ENCODE measurements at regions of chr2 and their contacts with region 1.

Region 1: DNA sequence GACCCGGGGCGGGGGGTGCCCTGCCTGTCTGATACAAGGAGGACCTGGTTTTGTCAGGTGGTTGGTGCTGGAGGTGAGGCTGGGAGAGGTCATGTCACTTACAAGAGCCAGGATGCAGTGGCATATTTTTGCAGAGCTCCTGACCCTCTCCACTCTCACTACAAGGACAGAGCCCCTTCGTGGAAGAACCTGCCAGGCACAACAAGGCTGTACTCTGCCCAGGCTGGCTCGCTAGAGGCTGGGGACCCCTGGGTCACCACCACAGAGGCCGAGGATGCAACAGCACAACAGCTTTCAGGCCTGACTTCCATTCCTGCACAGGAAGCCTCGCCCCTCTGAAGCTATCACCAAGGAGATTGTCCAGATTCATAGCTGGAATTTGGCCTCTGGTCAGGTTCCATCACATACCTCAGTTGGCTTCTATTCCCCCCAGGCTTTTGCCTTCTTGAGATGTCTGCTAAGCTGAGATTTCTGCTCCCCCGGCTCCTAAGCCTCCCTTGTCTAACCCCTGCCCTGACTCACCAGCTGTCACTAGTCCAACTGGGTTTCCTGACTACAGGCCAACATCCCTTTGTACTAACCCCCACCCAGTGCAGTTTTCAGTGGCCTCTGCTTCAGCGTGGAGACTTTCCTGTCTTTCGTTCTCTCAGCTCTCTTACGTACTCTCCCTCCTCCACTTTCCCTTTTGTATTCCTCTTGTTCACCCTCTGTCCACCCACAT is 132.5 kb upstream of the EPAS1 start:
- DNase-seq: peak; percentile 29 to 67 (median 47)
- ATAC-seq: peak; percentile 80
- H3K4me3 ChIP-seq: no peak overlapping the region
- H3K27ac ChIP-seq: peak overlapping the region in 1 of 4 donors; percentile 15
- H3K4me1 ChIP-seq: no peaks in the 10 kb centered on the region
- H3K27me3 ChIP-seq: no peaks in the 10 kb centered on the region
- CTCF ChIP-seq: no peak
- POLR2A ChIP-seq: no peak

Region 2: GRCh38 chr2:46210063-46210462 is 45.3 kb after region 1 on chr2:
- intact Hi-C with region 1: loop called (anchors 2 kb)
- DNase-seq: no peak
- ATAC-seq: no peak
- H3K4me3 ChIP-seq: no peak overlapping the region
- H3K27ac ChIP-seq: no peak overlapping the region
- H3K4me1 ChIP-seq: no peaks in the 10 kb centered on the region
- H3K27me3 ChIP-seq: no peaks in the 10 kb centered on the region
- CTCF ChIP-seq: no peak
- POLR2A ChIP-seq: no peak

Measured in body of pancreas (tissue), 4 donors.